Activated T-helper 1 cell treated with anti-CD3 and anti-CD28 coated beads, Interleukin-12 subunit alpha, Interleukin-12 subunit beta, Interleukin-2, Interleukin-4 antibody, amounts not matched to agents 30 ng/mL and 10 ng/mL and 1 ng/mL, durations not matched to agents 14 hours and 24 hours and 36 hours (primary cell): ENCODE measurements at regions of chr1 and their contacts with region 1.

Region 1: DNA sequence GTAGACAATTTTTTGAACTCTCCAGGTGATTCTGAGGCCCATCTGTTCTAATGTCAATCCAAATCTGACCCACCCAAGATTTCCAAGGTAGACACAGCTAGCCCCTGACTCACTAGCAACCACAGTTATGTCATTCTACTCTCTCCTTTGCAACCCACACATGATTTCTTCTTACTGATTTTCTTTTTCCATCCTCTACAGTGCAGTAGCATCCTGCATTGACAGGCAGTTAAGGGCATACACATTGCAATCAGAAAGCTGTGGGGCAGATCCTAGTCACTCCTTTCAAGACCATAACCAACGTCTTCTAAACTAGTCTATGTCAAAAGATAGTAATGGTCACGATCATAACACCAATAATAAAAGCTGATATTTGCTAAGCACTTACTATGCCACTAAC is 54.2 kb downstream of the JAK1 start:
- DNase-seq: no peak
- H3K4me3 Mint-ChIP-seq: no peak overlapping the region
- H3K27ac Mint-ChIP-seq: peak overlapping the region; percentile 20
- H3K4me1 Mint-ChIP-seq: peaks cover 61% of the 10 kb centered on the region
- H3K27me3 Mint-ChIP-seq: no peaks in the 10 kb centered on the region

Region 2: DNA sequence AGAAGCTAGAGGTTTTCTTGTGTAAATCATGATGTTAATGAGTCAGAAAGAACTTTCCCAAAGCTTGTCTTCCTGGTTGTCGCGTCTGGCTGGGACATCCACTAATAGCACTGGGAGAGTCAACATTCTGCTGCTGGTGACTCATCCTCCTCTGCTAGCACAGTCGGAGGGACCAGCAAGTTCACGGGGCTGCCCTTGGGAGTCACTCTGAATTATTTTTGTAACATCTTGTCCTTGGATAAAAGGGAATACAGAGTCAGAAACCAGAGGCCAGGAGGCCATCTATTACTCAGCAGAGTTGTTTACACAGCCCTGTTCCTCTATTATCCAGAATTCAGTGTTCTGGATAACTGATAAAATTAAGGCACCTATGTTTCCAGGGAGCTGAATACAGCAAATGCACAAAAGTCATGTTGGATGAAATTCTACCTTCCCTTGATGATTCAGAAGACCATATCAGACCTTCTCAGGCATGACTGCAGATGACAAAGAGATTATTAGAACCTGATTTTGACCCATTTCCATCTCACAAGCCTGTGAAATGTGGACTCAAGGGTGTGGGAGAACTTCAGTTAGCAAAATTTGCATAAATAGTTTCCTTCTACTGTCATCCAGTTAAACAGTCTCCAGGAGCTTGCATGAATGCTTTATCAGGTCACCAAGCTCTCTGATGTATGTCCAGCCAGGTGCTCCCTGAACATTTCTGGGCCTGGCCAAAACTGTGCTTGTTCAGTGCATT is 13.9 kb before region 1 on chr1:
- intact Hi-C with region 1: loop called (anchors 2 kb)
- DNase-seq: no peak
- H3K4me3 Mint-ChIP-seq: no peak overlapping the region
- H3K27ac Mint-ChIP-seq: peak overlapping the region; percentile 3
- H3K4me1 Mint-ChIP-seq: peaks cover 71% of the 10 kb centered on the region
- H3K27me3 Mint-ChIP-seq: no peaks in the 10 kb centered on the region